ENCODE measurements at regions of chr11 and their contacts with region 1.

Region 1: DNA sequence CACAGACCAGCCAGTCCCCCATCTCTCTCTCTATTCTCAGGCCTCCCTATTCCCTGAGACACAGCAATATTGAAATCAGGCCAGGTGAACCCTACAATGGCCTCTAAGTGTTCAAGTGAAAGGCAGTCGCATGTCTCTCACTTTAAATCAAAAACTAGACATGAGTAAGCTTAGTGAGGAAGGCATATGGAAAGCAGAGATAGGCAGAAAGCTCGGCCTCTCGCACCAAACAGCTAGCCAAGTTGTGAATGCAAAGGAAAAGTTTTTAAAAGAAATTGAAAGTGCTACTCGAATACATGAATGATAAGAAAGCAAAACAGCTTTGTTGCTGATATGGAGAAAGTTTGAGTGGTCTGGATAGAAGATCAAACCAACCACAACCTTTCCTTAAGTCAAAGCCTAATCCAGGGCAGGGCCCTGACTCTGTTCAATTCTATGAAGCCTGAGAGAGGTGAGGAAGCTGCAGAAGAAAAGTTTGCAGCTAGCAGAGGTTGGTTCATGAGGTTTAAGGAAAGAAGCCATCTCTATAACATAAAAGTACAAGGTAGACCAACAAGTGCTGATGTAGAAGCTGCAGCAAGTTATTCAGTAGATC is 19.8 kb upstream of the MPZL2 start:
- DNase-seq: no peak
- ATAC-seq: peak; percentile 57
- H3K4me3 Mint-ChIP-seq: peak overlapping the region; percentile 59
- H3K27ac Mint-ChIP-seq: peak overlapping the region; percentile 81
- H3K4me1 Mint-ChIP-seq: peaks cover 36% of the 10 kb centered on the region
- H3K27me3 Mint-ChIP-seq: no peaks in the 10 kb centered on the region

Region 2: DNA sequence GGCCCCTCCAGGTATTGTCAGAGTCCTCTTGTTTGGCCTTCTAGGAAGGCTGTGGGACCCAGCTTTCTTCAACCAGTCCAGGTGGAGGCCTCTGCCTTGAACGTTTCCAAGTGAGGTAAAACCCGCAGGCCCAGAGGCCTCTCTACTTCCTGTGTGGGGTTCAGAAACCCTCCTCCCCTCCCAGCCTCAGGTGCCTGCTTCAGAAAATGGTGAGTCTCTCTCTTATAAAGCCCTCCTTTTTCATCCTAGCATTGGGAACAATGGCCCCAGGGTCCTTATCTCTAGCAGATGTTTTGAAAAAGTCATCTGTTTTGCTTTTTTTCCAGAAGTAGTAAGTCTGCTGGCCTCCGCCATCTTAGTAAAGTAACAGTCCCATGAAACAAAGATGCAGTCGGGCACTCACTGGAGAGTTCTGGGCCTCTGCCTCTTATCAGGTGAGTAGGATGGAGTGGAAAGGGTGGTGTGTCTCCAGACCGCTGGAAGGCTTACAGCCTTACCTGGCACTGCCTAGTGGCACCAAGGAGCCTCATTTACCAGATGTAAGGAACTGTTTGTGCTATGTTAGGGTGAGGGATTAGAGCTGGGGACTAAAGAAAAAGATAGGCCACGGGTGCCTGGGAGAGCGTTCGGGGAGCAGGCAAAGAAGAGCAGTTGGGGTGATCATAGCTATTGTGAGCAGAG is 20.9 kb after region 1 on chr11 and contains the start of gene CD3E:
- POLR2A ChIA-PET with region 1: interaction called, 13 read pairs
- DNase-seq: peak; percentile 70
- ATAC-seq: peak; percentile 79
- H3K4me3 Mint-ChIP-seq: peak within 1 kb of the TSS; percentile 96
- H3K27ac Mint-ChIP-seq: peak within 1 kb of the TSS; percentile 99
- H3K4me1 Mint-ChIP-seq: peaks cover 54% of the 10 kb centered on the region
- H3K27me3 Mint-ChIP-seq: no peaks in the 10 kb centered on the region
- total RNA-seq, gene CD3E: 607 to 630 TPM

Measured in activated naive CD8-positive, alpha-beta T cell treated with anti-CD3 and anti-CD28 coated beads, Interleukin-2, amount 10 ng/mL, durations not matched to agents 7 days and 5 days (primary cell).